T-cell (primary cell): ENCODE measurements at regions of chr7 and their contacts with region 1.

Region 1: GRCh38 chr7:121366852-121367431 is 29.2 kb downstream of the FAM3C start:
- DNase-seq: peak in 14 of 35 experiments; percentile 2 to 70 (median 16)
- ATAC-seq: no peak
- H3K4me3 ChIP-seq: no peak overlapping the region
- H3K4me3 Mint-ChIP-seq: no peak overlapping the region
- H3K27ac ChIP-seq: no peak overlapping the region
- H3K27ac Mint-ChIP-seq: no peak overlapping the region
- H3K4me1 ChIP-seq: no peaks in the 10 kb centered on the region
- H3K4me1 Mint-ChIP-seq: peaks cover 6 to 29% (median 22%) of the 10 kb centered on the region in 3 donors
- H3K27me3 ChIP-seq: no peaks in the 10 kb centered on the region
- H3K27me3 Mint-ChIP-seq: no peaks in the 10 kb centered on the region

Region 2: GRCh38 chr7:121385800-121386179 is 18.8 kb after region 1 on chr7:
- CTCF ChIA-PET with region 1: interaction called, 4 to 15 read pairs
- POLR2A ChIA-PET with region 1: no interaction called
- DNase-seq: peak in 10 of 35 experiments; percentile 3 to 60 (median 13)
- ATAC-seq: peak; percentile 60 to 93 (median 69)
- H3K4me3 ChIP-seq: no peak overlapping the region
- H3K4me3 Mint-ChIP-seq: no peak overlapping the region
- H3K27ac ChIP-seq: no peak overlapping the region
- H3K27ac Mint-ChIP-seq: no peak overlapping the region
- H3K4me1 ChIP-seq: peaks cover 2 to 18% of the 10 kb centered on the region in 2 experiments
- H3K4me1 Mint-ChIP-seq: peaks cover 68 to 80% (median 76%) of the 10 kb centered on the region in 3 donors
- H3K27me3 ChIP-seq: no peaks in the 10 kb centered on the region
- H3K27me3 Mint-ChIP-seq: no peaks in the 10 kb centered on the region

Region 3: DNA sequence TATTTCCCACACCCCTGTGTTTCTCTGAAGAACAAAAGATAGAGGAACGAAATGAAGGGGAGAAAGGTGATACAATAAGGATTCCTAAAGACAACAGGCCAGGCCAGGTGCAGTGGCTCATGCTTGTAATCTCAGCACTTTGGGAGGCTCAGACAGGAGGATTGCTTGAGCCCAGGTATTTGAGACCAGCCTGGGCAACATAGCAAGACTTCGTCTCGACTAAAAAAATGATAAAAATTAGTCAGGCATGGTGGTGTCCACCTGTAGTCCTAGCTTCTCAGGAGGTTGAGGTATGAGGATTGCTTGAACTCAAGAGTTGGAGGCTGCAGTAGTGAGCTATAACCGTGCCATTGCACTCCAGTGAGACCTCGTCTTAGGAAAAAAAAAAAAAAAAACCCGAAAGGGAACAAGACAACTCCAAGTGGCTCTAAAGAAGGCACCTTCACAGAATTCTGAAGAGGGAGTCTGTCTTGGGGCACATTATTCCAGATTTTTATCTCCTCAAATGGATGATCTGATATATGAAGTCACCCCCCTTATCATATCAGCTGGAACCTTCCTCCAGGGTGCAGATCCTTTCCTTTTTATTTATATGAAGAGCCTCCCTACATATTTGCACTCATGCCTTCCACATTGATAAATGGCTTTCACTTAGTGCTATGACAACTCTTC is 70.7 kb after region 1 on chr7:
- CTCF ChIA-PET with region 1: interaction called, 3 to 15 read pairs
- POLR2A ChIA-PET with region 1: no interaction called
- DNase-seq: no peak
- ATAC-seq: peak in 2 of 4 experiments; percentile 21 to 23
- H3K4me3 ChIP-seq: no peak overlapping the region
- H3K4me3 Mint-ChIP-seq: peak overlapping the region; percentile 66 to 72 (median 68)
- H3K27ac ChIP-seq: peak overlapping the region; percentile 62
- H3K27ac Mint-ChIP-seq: peak overlapping the region; percentile 97
- H3K4me1 ChIP-seq: peaks cover 9 to 22% of the 10 kb centered on the region in 2 experiments
- H3K4me1 Mint-ChIP-seq: peaks cover 26 to 53% (median 41%) of the 10 kb centered on the region in 3 donors
- H3K27me3 ChIP-seq: no peaks in the 10 kb centered on the region
- H3K27me3 Mint-ChIP-seq: no peaks in the 10 kb centered on the region

Region 4: GRCh38 chr7:121459148-121459547 is 92.2 kb after region 1 on chr7:
- CTCF ChIA-PET with region 1: no interaction called
- POLR2A ChIA-PET with region 1: no interaction called
- DNase-seq: no peak
- ATAC-seq: no peak
- H3K4me3 ChIP-seq: no peak overlapping the region
- H3K4me3 Mint-ChIP-seq: no peak overlapping the region
- H3K27ac ChIP-seq: no peak overlapping the region
- H3K27ac Mint-ChIP-seq: no peak overlapping the region
- H3K4me1 ChIP-seq: no peaks in the 10 kb centered on the region
- H3K4me1 Mint-ChIP-seq: no peaks in the 10 kb centered on the region
- H3K27me3 ChIP-seq: no peaks in the 10 kb centered on the region
- H3K27me3 Mint-ChIP-seq: peaks cover 0 to 7% of the 10 kb centered on the region in 2 donors

Region 5: GRCh38 chr7:121530227-121531174 is 163.6 kb after region 1 on chr7:
- CTCF ChIA-PET with region 1: interaction called in 1 of 2 experiments, 12 read pairs
- POLR2A ChIA-PET with region 1: no interaction called
- DNase-seq: peak in 32 of 35 experiments; percentile 0 to 62 (median 21)
- ATAC-seq: peak; percentile 90 to 99 (median 92)
- H3K4me3 ChIP-seq: no peak overlapping the region
- H3K4me3 Mint-ChIP-seq: peak overlapping the region in 1 of 3 donors; percentile 29
- H3K27ac ChIP-seq: peak overlapping the region; percentile 65
- H3K27ac Mint-ChIP-seq: peak overlapping the region; percentile 79 to 85
- H3K4me1 ChIP-seq: no peaks in the 10 kb centered on the region
- H3K4me1 Mint-ChIP-seq: peaks cover 0 to 21% (median 19%) of the 10 kb centered on the region in 3 donors
- H3K27me3 ChIP-seq: peaks cover 0 to 3% of the 10 kb centered on the region in 2 experiments
- H3K27me3 Mint-ChIP-seq: peaks cover 0 to 4% of the 10 kb centered on the region in 2 donors

Region 6: GRCh38 chr7:121994625-121995410 is 627.9 kb after region 1 on chr7:
- CTCF ChIA-PET with region 1: interaction called in 1 of 2 experiments, 12 read pairs
- POLR2A ChIA-PET with region 1: no interaction called
- DNase-seq: peak in 20 of 35 experiments; percentile 0 to 32 (median 7)
- ATAC-seq: peak in 1 of 4 experiments; percentile 43
- H3K4me3 ChIP-seq: no peak overlapping the region
- H3K4me3 Mint-ChIP-seq: no peak overlapping the region
- H3K27ac ChIP-seq: no peak overlapping the region
- H3K27ac Mint-ChIP-seq: no peak overlapping the region
- H3K4me1 ChIP-seq: no peaks in the 10 kb centered on the region
- H3K4me1 Mint-ChIP-seq: no peaks in the 10 kb centered on the region
- H3K27me3 ChIP-seq: no peaks in the 10 kb centered on the region
- H3K27me3 Mint-ChIP-seq: no peaks in the 10 kb centered on the region